Heart right ventricle (tissue), 16 donors: ENCODE measurements at regions of chr14 and their contacts with region 1.

Region 1: DNA sequence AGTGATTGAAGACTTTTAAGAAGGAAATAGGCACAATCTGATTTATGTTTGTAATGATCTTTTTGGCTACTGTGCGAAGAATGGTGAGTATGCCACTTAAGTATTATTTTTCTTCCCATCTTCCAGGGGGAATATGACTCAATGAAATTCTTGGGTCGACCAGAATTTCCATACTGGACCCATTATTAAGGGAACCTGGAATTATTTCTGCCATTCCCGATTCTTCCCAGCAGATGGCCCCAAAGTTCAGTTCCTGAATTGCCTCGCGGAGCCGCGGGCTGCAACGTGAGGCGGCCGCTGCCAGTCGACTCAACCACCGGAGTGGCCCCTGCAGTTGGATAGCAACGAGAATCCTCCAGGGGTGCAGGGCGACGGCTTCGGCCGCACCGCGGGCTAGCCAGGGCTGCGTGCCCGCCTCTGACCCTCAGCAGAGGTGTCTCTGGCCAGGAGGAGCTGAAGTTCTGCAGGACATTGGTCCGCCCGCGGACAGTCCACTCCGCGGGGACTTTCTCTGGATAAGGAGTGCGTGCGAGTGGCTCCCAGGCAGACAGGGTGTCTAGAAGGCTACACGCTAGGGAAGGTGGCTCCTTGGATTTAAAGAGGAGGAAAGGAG is 628 bp upstream of the TSHR start:
- DNase-seq: peak; percentile 70 to 82
- ATAC-seq: peak; percentile 89 to 96 (median 93)
- H3K4me3 ChIP-seq: peak overlapping the region; percentile 32 to 64 (median 53)
- H3K27ac ChIP-seq: peak overlapping the region in 1 of 10 donors; percentile 62
- H3K4me1 ChIP-seq: peaks cover 0 to 24% (median 9%) of the 10 kb centered on the region in 9 donors
- H3K27me3 ChIP-seq: peaks cover 0 to 29% (median 15%) of the 10 kb centered on the region in 7 donors
- CTCF ChIP-seq: peak; percentile 75 to 88 (median 79)

Region 2: DNA sequence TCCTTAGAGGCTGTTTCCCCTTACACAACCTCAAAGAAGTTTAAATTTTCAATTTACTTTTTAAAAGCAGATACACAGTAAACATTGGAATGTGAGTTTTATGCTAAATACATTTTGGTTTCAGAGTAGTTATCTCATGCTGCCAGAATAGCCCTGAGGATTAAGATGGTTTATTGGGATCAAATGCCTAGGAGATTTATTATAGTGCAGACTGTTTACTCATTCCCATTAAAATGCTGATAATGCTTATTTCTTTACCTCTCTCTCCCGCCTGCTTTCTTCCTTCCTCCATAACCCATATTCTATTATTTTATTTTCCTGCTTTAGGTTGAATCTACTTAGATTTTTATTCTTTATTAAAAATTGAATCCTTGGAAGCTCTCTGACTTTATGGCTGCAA is 1083.7 kb before region 1 on chr14:
- intact Hi-C with region 1: no loop called
- DNase-seq: no peak
- ATAC-seq: no peak
- H3K4me3 ChIP-seq: no peak overlapping the region
- H3K27ac ChIP-seq: no peak overlapping the region
- H3K4me1 ChIP-seq: no peaks in the 10 kb centered on the region
- H3K27me3 ChIP-seq: no peaks in the 10 kb centered on the region
- CTCF ChIP-seq: no peak

Region 3: GRCh38 chr14:80987235-80988032 is 32.6 kb after region 1 on chr14:
- intact Hi-C with region 1: loop called in 7 of 10 experiments (anchors 2 to 5 kb)
- DNase-seq: peak in 1 of 2 donors; percentile 63
- ATAC-seq: peak in 7 of 8 donors; percentile 52 to 80 (median 74)
- H3K4me3 ChIP-seq: no peak overlapping the region
- H3K27ac ChIP-seq: no peak overlapping the region
- H3K4me1 ChIP-seq: no peaks in the 10 kb centered on the region
- H3K27me3 ChIP-seq: peaks cover 0 to 35% (median 19%) of the 10 kb centered on the region in 7 donors
- CTCF ChIP-seq: peak; percentile 74 to 97 (median 92)

Region 4: DNA sequence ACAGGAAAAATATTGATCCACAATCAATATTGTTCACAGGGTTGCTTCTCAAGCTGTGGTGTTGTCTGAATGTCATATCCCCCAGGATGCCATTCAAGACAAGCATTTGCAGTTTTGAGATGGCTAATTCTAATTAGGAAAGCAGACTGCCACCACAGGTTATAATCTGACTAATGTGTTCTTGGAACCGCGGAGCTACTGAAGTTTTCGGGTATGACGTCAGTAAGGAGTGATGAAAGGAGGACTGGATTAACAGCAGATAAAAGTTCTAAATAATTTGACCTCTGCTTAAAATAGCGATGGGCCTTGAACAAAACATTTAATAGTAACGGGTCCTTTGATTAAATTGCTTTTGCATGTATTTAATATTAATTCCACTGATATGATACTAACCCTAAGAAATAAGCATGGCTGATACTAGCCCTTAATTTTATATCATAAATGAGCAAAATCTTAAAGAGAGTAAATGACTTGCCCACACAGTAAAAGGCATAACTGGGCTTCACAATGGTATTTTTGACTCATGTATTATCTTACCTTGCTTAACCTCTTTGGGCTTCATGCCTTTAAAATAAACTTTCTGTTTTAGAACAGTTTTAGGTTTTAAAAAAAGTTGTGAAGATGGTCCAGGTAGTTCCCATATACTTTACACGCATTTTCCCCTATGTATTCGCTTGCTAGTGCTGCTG is 50.9 kb after region 1 on chr14:
- intact Hi-C with region 1: no loop called
- DNase-seq: no peak
- ATAC-seq: peak in 5 of 8 donors; percentile 35 to 78 (median 56)
- H3K4me3 ChIP-seq: no peak overlapping the region
- H3K27ac ChIP-seq: no peak overlapping the region
- H3K4me1 ChIP-seq: peaks cover 0 to 8% (median 0%) of the 10 kb centered on the region in 9 donors
- H3K27me3 ChIP-seq: no peaks in the 10 kb centered on the region
- CTCF ChIP-seq: no peak

Region 5: DNA sequence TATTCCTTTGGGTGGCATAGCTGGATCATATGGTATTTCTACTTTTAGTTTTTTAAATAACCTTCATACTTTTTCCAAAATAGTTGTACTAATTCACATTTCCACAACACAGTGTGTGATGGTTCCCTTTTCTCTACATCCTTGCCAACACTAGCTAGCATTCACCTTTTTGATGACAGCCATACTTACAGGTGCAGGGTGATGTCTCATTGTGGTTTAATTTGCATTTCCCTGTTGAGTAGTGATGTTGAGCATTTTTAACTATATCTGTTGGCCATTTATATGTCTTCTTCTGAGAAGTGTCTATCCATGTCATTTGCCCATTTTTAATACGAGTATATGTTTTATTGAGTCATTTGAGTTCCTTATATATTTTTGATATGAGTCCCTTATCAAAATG is 96.8 kb after region 1 on chr14:
- intact Hi-C with region 1: no loop called
- DNase-seq: no peak
- ATAC-seq: no peak
- H3K4me3 ChIP-seq: no peak overlapping the region
- H3K27ac ChIP-seq: no peak overlapping the region
- H3K4me1 ChIP-seq: no peaks in the 10 kb centered on the region
- H3K27me3 ChIP-seq: no peaks in the 10 kb centered on the region
- CTCF ChIP-seq: no peak

Region 6: GRCh38 chr14:81164167-81164774 is 209.5 kb after region 1 on chr14:
- intact Hi-C with region 1: loop called in 3 of 10 experiments (anchors 10 kb)
- DNase-seq: peak in 1 of 2 donors; percentile 44
- ATAC-seq: peak; percentile 61 to 95 (median 90)
- H3K4me3 ChIP-seq: no peak overlapping the region
- H3K27ac ChIP-seq: peak overlapping the region in 1 of 10 donors; percentile 23
- H3K4me1 ChIP-seq: peaks cover 0 to 18% (median under 1%) of the 10 kb centered on the region in 9 donors
- H3K27me3 ChIP-seq: no peaks in the 10 kb centered on the region
- CTCF ChIP-seq: peak in 8 of 9 donors; percentile 23 to 66 (median 50)

Region 7: GRCh38 chr14:81170104-81170828 is 215.5 kb after region 1 on chr14:
- intact Hi-C with region 1: loop called in 5 of 10 experiments (anchors 2 to 10 kb)
- DNase-seq: peak; percentile 93
- ATAC-seq: peak; percentile 98 to 100 (median 100)
- H3K4me3 ChIP-seq: peak overlapping the region; percentile 65 to 84 (median 74)
- H3K27ac ChIP-seq: peak overlapping the region; percentile 87 to 98 (median 92)
- H3K4me1 ChIP-seq: peaks cover 0 to 28% (median 8%) of the 10 kb centered on the region in 9 donors
- H3K27me3 ChIP-seq: no peaks in the 10 kb centered on the region
- CTCF ChIP-seq: peak; percentile 89 to 95 (median 93)

Region 8: GRCh38 chr14:81315341-81315740 is 360.5 kb after region 1 on chr14:
- intact Hi-C with region 1: no loop called
- DNase-seq: no peak
- ATAC-seq: no peak
- H3K4me3 ChIP-seq: no peak overlapping the region
- H3K27ac ChIP-seq: no peak overlapping the region
- H3K4me1 ChIP-seq: peaks cover 0 to 20% (median 0%) of the 10 kb centered on the region in 9 donors
- H3K27me3 ChIP-seq: peaks cover 0 to 9% (median 0%) of the 10 kb centered on the region in 7 donors
- CTCF ChIP-seq: no peak

Region 9: GRCh38 chr14:81453166-81453766 is 498.5 kb after region 1 on chr14:
- intact Hi-C with region 1: loop called in 1 of 10 experiments (anchors 10 kb)
- DNase-seq: peak in 1 of 2 donors; percentile 51
- ATAC-seq: peak in 2 of 8 donors; percentile 26 to 44
- H3K4me3 ChIP-seq: no peak overlapping the region
- H3K27ac ChIP-seq: peak overlapping the region in 1 of 10 donors; percentile 19
- H3K4me1 ChIP-seq: peaks cover 0 to 26% (median 16%) of the 10 kb centered on the region in 9 donors
- H3K27me3 ChIP-seq: peaks cover 0 to 24% (median 10%) of the 10 kb centered on the region in 7 donors
- CTCF ChIP-seq: peak; percentile 50 to 88 (median 83)